ENCODE measurements at regions of chr10 and their contacts with region 1.

Region 1: DNA sequence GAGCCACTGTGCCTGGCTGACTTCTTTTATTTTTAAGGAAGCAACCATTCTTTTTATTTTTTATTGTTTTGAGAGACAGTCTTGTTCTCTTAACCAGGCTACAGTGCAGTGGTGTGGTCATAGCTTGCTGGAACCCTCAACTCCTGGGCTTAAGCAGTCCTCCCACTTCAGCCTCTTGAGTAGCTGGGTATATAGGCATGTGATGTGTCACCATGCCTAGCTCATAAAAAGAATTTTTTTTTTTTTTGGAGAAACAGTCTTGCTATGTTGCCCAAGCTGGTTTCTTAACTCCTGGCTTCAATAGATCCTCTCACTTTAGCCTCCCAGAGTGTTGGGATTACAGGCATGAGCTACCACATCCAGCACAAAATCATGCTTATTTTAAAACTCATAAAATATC is 5.8 kb downstream of the MCU start:
- DNase-seq: no peak
- ATAC-seq: no peak
- H3K4me3 ChIP-seq: no peak overlapping the region
- H3K4me3 Mint-ChIP-seq: no peak overlapping the region
- H3K27ac ChIP-seq: no peak overlapping the region
- H3K27ac Mint-ChIP-seq: no peak overlapping the region
- H3K4me1 ChIP-seq: peaks cover 8% of the 10 kb centered on the region
- H3K4me1 Mint-ChIP-seq: peaks cover 42% of the 10 kb centered on the region
- H3K27me3 ChIP-seq: no peaks in the 10 kb centered on the region
- H3K27me3 Mint-ChIP-seq: no peaks in the 10 kb centered on the region
- CTCF ChIP-seq: no peak

Region 2: DNA sequence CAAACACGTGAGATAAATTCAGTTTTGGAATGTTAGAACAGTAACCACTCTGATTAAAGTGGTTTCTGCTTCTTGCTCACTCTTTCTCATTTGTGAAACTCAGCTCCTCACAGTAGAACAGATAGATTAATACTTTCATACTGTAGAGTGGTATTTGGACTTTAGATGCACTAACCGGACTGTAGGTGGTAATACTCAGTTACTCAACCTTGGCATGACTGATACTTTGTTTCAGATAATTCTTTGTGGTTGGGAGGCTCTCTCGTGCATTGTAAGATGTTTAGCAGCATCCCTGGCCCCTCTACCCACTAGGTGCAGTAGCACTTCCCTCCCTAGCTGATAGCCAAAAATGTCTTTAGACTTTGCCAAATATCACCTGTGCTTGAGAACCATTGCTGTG is 31.8 kb after region 1 on chr10:
- CTCF ChIA-PET with region 1: no interaction called
- POLR2A ChIA-PET with region 1: no interaction called
- intact Hi-C with region 1: no loop called
- DNase-seq: no peak
- ATAC-seq: no peak
- H3K4me3 ChIP-seq: no peak overlapping the region
- H3K4me3 Mint-ChIP-seq: no peak overlapping the region
- H3K27ac ChIP-seq: no peak overlapping the region
- H3K27ac Mint-ChIP-seq: no peak overlapping the region
- H3K4me1 ChIP-seq: no peaks in the 10 kb centered on the region
- H3K4me1 Mint-ChIP-seq: peaks cover 13% of the 10 kb centered on the region
- H3K27me3 ChIP-seq: no peaks in the 10 kb centered on the region
- H3K27me3 Mint-ChIP-seq: no peaks in the 10 kb centered on the region
- CTCF ChIP-seq: no peak

Region 3: GRCh38 chr10:72834183-72834825 is 136.6 kb after region 1 on chr10:
- CTCF ChIA-PET with region 1: no interaction called
- POLR2A ChIA-PET with region 1: interaction called, 3 read pairs
- intact Hi-C with region 1: loop called (anchors 2 kb)
- DNase-seq: peak in 13 of 14 experiments; percentile 2 to 77 (median 23)
- ATAC-seq: peak; percentile 84
- H3K4me3 ChIP-seq: no peak overlapping the region
- H3K4me3 Mint-ChIP-seq: no peak overlapping the region
- H3K27ac ChIP-seq: no peak overlapping the region
- H3K27ac Mint-ChIP-seq: no peak overlapping the region
- H3K4me1 ChIP-seq: no peaks in the 10 kb centered on the region
- H3K4me1 Mint-ChIP-seq: peaks cover 4% of the 10 kb centered on the region
- H3K27me3 ChIP-seq: no peaks in the 10 kb centered on the region
- H3K27me3 Mint-ChIP-seq: no peaks in the 10 kb centered on the region
- CTCF ChIP-seq: peak; percentile 69

Measured in CD4-positive, alpha-beta T cell (primary cell).